ENCODE measurements at regions of chr3 and their contacts with region 1.

Region 1: DNA sequence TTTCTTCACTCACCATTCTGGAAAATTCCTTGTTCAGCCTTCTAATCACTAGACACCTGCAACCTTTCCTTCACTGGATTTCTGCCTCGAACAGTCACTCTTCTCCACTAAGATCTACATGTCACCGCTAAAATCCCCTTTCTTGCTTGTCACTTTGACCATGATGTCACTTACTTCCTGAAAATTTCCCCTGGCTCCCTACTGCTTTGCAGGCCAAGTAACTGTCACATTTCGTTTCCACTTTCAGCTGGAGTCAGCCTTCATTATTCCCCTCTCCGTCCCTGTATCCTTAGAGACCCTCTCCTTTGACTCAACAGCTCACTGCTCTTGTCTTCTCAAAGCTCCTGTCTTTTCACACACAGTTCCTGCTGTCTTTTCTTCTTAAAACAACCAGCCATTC is 15.9 kb downstream of the CHL1 start:
- DNase-seq: peak; percentile 50
- ATAC-seq: peak; percentile 89
- H3K4me3 ChIP-seq: no peak overlapping the region
- H3K27ac ChIP-seq: no peak overlapping the region
- H3K4me1 ChIP-seq: no peaks in the 10 kb centered on the region
- H3K27me3 ChIP-seq: no peaks in the 10 kb centered on the region
- CTCF ChIP-seq: no peak
- EP300 ChIP-seq: peak in 1 of 2 experiments; percentile 46; a peak in 1 of 4 replicates
- POLR2A ChIP-seq: no peak
- RAD21 ChIP-seq: no peak

Region 2: DNA sequence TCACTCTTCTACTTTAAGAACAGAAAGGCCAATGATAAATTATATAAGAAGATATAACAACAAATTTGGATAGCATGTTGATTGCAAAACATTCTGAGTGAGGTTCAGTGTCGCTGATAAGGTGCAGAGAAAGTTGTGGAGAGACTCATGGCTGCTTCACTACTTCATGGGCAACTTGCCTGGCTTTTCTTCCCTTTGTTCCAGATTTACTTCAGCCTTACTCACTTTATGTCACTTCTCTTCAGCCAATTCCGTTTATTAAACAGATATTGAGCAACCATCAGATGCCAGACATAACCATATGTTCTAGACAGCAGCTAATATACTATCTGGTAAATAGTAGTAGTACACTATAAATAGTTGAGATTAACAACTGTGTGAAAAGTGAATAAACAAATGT is 165.9 kb before region 1 on chr3:
- CTCF ChIA-PET with region 1: interaction called, 14 read pairs
- POLR2A ChIA-PET with region 1: no interaction called
- RAD21 ChIA-PET with region 1: no interaction called
- SMC1A ChIA-PET with region 1: interaction called, 5 read pairs
- in situ Hi-C with region 1: no loop called
- intact Hi-C with region 1: no loop called
- DNase-seq: no peak
- ATAC-seq: no peak
- H3K4me3 ChIP-seq: no peak overlapping the region
- H3K27ac ChIP-seq: no peak overlapping the region
- H3K4me1 ChIP-seq: no peaks in the 10 kb centered on the region
- H3K27me3 ChIP-seq: no peaks in the 10 kb centered on the region
- CTCF ChIP-seq: no peak
- EP300 ChIP-seq: no peak
- POLR2A ChIP-seq: no peak
- RAD21 ChIP-seq: no peak

Region 3: DNA sequence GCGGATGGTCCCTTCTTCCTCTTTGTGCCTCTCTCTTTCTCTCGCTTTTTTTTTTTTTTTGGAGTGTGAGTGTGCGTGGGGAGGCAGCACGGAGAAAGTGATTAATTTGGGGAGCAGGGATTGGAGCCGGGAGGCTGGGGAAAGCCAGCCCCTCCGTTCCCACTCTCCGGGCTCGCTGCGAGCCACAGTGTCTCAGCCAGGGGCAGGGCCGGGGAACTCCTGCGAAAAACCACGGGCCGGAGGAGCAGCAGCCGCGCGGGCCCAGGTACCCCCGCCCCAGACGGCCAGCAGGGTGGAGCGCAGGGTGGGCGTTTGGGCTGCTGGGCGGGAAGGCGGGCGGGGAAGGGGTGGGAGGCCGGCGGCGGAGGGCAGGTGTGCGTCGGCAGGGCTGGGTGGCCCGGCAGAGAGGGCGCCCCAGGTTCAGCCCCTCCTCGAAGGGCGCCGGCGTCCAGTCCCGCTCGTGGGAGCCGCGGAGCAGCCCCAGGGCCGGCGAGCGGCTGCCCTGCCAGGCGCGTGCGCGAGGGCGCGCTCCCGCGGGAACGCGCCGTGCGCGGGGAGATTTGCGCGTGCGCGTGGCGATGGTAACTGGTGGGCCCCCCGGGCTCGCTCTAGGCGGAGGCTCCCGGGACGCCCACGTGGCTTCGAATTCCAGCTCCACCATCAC is 14.5 kb before region 1 on chr3:
- CTCF ChIA-PET with region 1: interaction called, 14 read pairs
- POLR2A ChIA-PET with region 1: interaction called, 3 read pairs
- RAD21 ChIA-PET with region 1: interaction called, 6 read pairs
- SMC1A ChIA-PET with region 1: interaction called, 14 read pairs
- in situ Hi-C with region 1: no loop called
- intact Hi-C with region 1: no loop called
- DNase-seq: no peak
- ATAC-seq: peak; percentile 65
- H3K4me3 ChIP-seq: 0 out of 2 replicates have a peak overlapping the region, but pooled peaks have one; percentile 9
- H3K27ac ChIP-seq: no peak overlapping the region
- H3K4me1 ChIP-seq: no peaks in the 10 kb centered on the region
- H3K27me3 ChIP-seq: peaks cover 0 to 5% of the 10 kb centered on the region in 2 experiments; a peak in 2 of 4 replicates
- CTCF ChIP-seq: no peak
- EP300 ChIP-seq: no peak
- POLR2A ChIP-seq: no peak
- RAD21 ChIP-seq: no peak

Region 4: GRCh38 chr3:229183-229661 is 16.8 kb after region 1 on chr3:
- CTCF ChIA-PET with region 1: no interaction called
- POLR2A ChIA-PET with region 1: interaction called, 4 read pairs
- RAD21 ChIA-PET with region 1: no interaction called
- SMC1A ChIA-PET with region 1: interaction called, 10 read pairs
- in situ Hi-C with region 1: no loop called
- intact Hi-C with region 1: no loop called
- DNase-seq: no peak
- ATAC-seq: no peak
- H3K4me3 ChIP-seq: no peak overlapping the region
- H3K27ac ChIP-seq: no peak overlapping the region
- H3K4me1 ChIP-seq: no peaks in the 10 kb centered on the region
- H3K27me3 ChIP-seq: no peaks in the 10 kb centered on the region
- CTCF ChIP-seq: no peak
- EP300 ChIP-seq: no peak
- POLR2A ChIP-seq: no peak
- RAD21 ChIP-seq: no peak

Region 5: GRCh38 chr3:288417-288816 is 76.0 kb after region 1 on chr3:
- CTCF ChIA-PET with region 1: interaction called, 8 read pairs
- POLR2A ChIA-PET with region 1: interaction called, 3 read pairs
- RAD21 ChIA-PET with region 1: interaction called, 4 read pairs
- SMC1A ChIA-PET with region 1: interaction called, 12 read pairs
- in situ Hi-C with region 1: no loop called
- intact Hi-C with region 1: no loop called
- DNase-seq: no peak
- ATAC-seq: no peak
- H3K4me3 ChIP-seq: no peak overlapping the region
- H3K27ac ChIP-seq: no peak overlapping the region
- H3K4me1 ChIP-seq: peaks cover 10% of the 10 kb centered on the region
- H3K27me3 ChIP-seq: no peaks in the 10 kb centered on the region
- CTCF ChIP-seq: no peak
- EP300 ChIP-seq: no peak
- POLR2A ChIP-seq: no peak
- RAD21 ChIP-seq: no peak

Measured in GM12878 (cell line).